ENCODE measurements at regions of chr20 and their contacts with region 1.

Region 1: GRCh38 chr20:1212607-1213396 is 9.5 kb downstream of the C20orf202 start:
- DNase-seq: peak; percentile 55 to 72
- ATAC-seq: peak; percentile 73 to 93 (median 84)
- H3K4me3 ChIP-seq: no peak overlapping the region
- H3K27ac ChIP-seq: no peak overlapping the region
- H3K4me1 ChIP-seq: peaks cover 0 to 7% (median 0%) of the 10 kb centered on the region in 9 donors
- H3K27me3 ChIP-seq: peaks cover 0 to 17% (median 4%) of the 10 kb centered on the region in 7 donors
- CTCF ChIP-seq: peak; percentile 42 to 86 (median 81)

Region 2: GRCh38 chr20:805713-806112 is 407.1 kb before region 1 on chr20:
- intact Hi-C with region 1: loop called in 2 of 10 experiments (anchors 10 kb)
- DNase-seq: no peak
- ATAC-seq: no peak
- H3K4me3 ChIP-seq: no peak overlapping the region
- H3K27ac ChIP-seq: no peak overlapping the region
- H3K4me1 ChIP-seq: no peaks in the 10 kb centered on the region
- H3K27me3 ChIP-seq: peaks cover 0 to 31% (median 17%) of the 10 kb centered on the region in 7 donors
- CTCF ChIP-seq: no peak

Region 3: GRCh38 chr20:956330-956951 is 256.4 kb before region 1 on chr20:
- intact Hi-C with region 1: loop called in 2 of 10 experiments (anchors 5 to 10 kb)
- DNase-seq: peak; percentile 54 to 69
- ATAC-seq: peak; percentile 57 to 86 (median 80)
- H3K4me3 ChIP-seq: no peak overlapping the region
- H3K27ac ChIP-seq: no peak overlapping the region
- H3K4me1 ChIP-seq: peaks cover 0 to 4% (median 0%) of the 10 kb centered on the region in 9 donors
- H3K27me3 ChIP-seq: peaks cover 0 to 75% (median 66%) of the 10 kb centered on the region in 7 donors
- CTCF ChIP-seq: peak; percentile 90 to 99 (median 98)

Region 4: GRCh38 chr20:1108437-1108920 is 104.3 kb before region 1 on chr20:
- intact Hi-C with region 1: loop called in 2 of 10 experiments (anchors 5 to 10 kb)
- DNase-seq: peak; percentile 43 to 45
- ATAC-seq: peak in 7 of 8 donors; percentile 34 to 81 (median 70)
- H3K4me3 ChIP-seq: no peak overlapping the region
- H3K27ac ChIP-seq: no peak overlapping the region
- H3K4me1 ChIP-seq: no peaks in the 10 kb centered on the region
- H3K27me3 ChIP-seq: no peaks in the 10 kb centered on the region
- CTCF ChIP-seq: peak; percentile 51 to 84 (median 75)

Region 5: DNA sequence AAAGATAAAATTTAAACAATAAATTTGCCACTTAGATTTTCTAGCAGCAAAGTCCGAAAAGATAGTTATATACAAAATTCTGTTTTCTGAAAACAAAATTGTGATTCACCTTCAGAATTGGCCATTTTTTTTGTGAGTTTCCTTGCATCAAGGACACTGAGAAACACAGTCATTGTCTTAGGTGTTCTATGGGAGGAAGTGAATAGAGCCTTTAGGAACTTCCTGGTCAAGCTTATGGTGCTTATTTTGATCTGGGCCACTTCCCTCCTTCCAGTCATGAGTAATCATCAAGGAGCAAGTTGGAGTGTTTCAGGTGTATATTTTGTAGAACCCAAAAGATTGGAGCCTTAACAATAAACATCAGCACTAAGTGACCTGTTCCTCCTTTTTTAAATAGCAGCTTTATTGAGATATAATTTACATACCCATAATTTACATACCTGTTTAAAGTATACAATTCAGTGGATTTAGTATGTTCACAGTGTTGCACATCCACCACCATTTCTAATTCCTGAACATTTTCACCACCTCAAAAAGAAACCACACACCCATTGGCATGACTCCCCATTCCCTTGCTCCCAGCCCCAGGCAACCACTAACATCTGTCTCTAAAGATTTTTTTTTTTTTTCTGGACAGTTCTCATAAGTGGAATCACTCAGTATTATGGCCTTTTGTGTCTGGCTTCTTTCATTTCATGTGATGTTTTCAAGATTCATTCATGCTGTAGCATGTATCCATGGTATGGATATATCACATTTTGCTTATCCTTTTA is 45.7 kb before region 1 on chr20:
- intact Hi-C with region 1: no loop called
- DNase-seq: no peak
- ATAC-seq: no peak
- H3K4me3 ChIP-seq: no peak overlapping the region
- H3K27ac ChIP-seq: no peak overlapping the region
- H3K4me1 ChIP-seq: peaks cover 0 to 18% (median 6%) of the 10 kb centered on the region in 9 donors
- H3K27me3 ChIP-seq: no peaks in the 10 kb centered on the region
- CTCF ChIP-seq: no peak

Region 6: DNA sequence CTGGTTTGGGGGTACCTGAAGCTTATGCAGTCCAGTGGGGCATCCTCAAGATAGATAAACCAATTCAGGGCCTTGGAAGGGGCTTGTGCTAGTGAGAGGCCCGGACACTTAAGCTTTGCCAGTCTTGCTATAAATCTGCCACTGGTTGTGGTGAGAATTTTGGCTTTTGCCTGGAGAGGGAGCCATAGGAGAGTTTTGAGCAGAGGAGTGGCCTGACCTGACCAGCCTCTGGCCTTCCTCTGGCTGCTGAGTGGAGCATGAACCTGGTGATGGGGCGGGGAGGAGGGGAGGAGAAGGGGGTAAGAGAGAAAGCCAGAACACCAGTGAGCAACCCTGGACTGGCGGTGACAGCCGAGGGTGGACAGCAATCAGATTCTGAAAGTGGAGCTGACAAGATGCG is 35.1 kb before region 1 on chr20:
- intact Hi-C with region 1: loop called in 1 of 10 experiments (anchors 5 kb)
- DNase-seq: no peak
- ATAC-seq: no peak
- H3K4me3 ChIP-seq: no peak overlapping the region
- H3K27ac ChIP-seq: no peak overlapping the region
- H3K4me1 ChIP-seq: peaks cover 0 to 8% (median 0%) of the 10 kb centered on the region in 9 donors
- H3K27me3 ChIP-seq: no peaks in the 10 kb centered on the region
- CTCF ChIP-seq: peak in 2 of 9 donors; percentile 11 to 16

Region 7: GRCh38 chr20:1500491-1501275 is 287.9 kb after region 1 on chr20:
- intact Hi-C with region 1: no loop called
- DNase-seq: no peak
- ATAC-seq: no peak
- H3K4me3 ChIP-seq: no peak overlapping the region
- H3K27ac ChIP-seq: no peak overlapping the region
- H3K4me1 ChIP-seq: peaks cover 0 to 6% (median 0%) of the 10 kb centered on the region in 9 donors
- H3K27me3 ChIP-seq: peaks cover 0 to 9% (median 6%) of the 10 kb centered on the region in 7 donors
- CTCF ChIP-seq: no peak

Measured in heart right ventricle (tissue), 16 donors.